ENCODE measurements at regions of chr17 and their contacts with region 1.

Region 1: GRCh38 chr17:70636517-70637133 is 467.3 kb downstream of the KCNJ2 start:
- DNase-seq: peak in 1 of 2 experiments; percentile 1
- H3K4me3 ChIP-seq: no peak overlapping the region
- H3K27ac ChIP-seq: no peak overlapping the region
- H3K4me1 ChIP-seq: no peaks in the 10 kb centered on the region
- H3K27me3 ChIP-seq: no peaks in the 10 kb centered on the region
- CTCF ChIP-seq: peak; percentile 92

Region 2: GRCh38 chr17:71987634-71988033 is 1351.0 kb after region 1 on chr17:
- CTCF ChIA-PET with region 1: no interaction called
- POLR2A ChIA-PET with region 1: no interaction called
- intact Hi-C with region 1: loop called (anchors 5 kb)
- DNase-seq: peak in 1 of 2 experiments; percentile 38
- H3K4me3 ChIP-seq: no peak overlapping the region
- H3K27ac ChIP-seq: no peak overlapping the region
- H3K4me1 ChIP-seq: peaks cover 30% of the 10 kb centered on the region
- H3K27me3 ChIP-seq: no peaks in the 10 kb centered on the region
- CTCF ChIP-seq: no peak

Measured in PC-9 (cell line).